IMR-90 (cell line): ENCODE measurements at regions of chr6 and their contacts with region 1.

Region 1: DNA sequence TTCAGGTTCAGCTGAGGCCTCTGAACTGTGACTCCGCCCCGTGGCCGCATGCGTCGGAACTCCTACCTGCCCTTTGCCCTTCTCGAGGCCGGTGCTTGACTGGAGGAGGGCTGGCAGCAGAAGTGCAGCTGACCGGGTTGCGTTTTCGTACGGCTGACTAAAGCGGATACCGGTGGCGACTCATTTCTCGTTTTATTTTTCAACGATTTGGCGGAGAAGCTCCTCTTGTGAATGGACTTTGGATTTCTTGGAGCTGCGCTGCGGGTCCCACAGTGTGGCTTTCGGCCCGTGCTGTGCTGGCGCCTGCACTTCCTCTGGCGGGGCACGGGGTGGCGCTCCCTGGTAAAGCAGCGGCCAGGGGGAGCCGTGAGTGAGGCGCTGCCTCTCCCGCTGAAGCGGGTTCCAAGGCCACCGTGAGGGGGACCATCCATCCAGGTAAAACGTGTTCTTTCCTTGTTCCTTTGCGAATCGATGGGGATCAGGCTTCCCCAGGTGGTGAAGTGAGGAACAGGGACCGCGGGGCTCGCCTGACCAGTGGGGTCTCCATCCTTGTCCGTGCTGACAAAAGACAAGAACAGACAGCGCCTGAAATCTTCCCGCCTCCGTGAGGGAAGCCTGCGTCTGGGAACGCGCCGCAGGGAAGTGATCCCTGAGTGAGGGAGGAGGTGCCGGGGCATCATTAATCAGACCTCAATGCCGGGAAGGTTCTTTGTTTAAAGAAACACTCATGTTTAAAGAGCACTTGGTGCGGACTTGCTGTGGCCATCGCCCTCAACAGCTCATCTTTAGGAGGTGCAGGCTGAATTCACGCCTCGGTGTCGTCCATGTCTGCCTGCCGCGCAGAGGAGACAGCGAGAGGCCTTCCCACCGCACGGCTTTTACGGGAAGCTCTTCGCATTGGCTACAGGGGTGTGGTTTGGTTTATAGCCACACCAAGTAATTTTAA is 38.8 kb downstream of the ERMARD start:
- DNase-seq: peak; percentile 59
- ATAC-seq: peak; percentile 99
- H3K4me3 ChIP-seq: peak overlapping the region; percentile 43
- H3K27ac ChIP-seq: peak overlapping the region; percentile 6
- H3K4me1 ChIP-seq: peaks cover 3% of the 10 kb centered on the region; the same call in 1 of the 2 replicates
- H3K27me3 ChIP-seq: peaks cover 9% of the 10 kb centered on the region; the same call in 1 of the 2 replicates
- CTCF ChIP-seq: peak; percentile 97
- POLR2A ChIP-seq: peak; percentile 44; the same call in 1 of the 2 replicates
- RAD21 ChIP-seq: peak; percentile 93

Region 2: GRCh38 chr6:169800668-169801395 is 10.6 kb after region 1 on chr6:
- CTCF ChIA-PET with region 1: interaction called, 18 read pairs
- POLR2A ChIA-PET with region 1: no interaction called
- dilution Hi-C with region 1: no loop called
- in situ Hi-C with region 1: no loop called
- intact Hi-C with region 1: no loop called
- DNase-seq: peak; percentile 82
- ATAC-seq: peak; percentile 91
- H3K4me3 ChIP-seq: no peak overlapping the region
- H3K27ac ChIP-seq: peak overlapping the region; percentile 4; the same call in 1 of the 2 replicates
- H3K4me1 ChIP-seq: peaks cover 10% of the 10 kb centered on the region; the same call in 1 of the 2 replicates
- H3K27me3 ChIP-seq: peaks cover 18% of the 10 kb centered on the region
- CTCF ChIP-seq: no peak
- POLR2A ChIP-seq: no peak
- RAD21 ChIP-seq: no peak

Region 3: DNA sequence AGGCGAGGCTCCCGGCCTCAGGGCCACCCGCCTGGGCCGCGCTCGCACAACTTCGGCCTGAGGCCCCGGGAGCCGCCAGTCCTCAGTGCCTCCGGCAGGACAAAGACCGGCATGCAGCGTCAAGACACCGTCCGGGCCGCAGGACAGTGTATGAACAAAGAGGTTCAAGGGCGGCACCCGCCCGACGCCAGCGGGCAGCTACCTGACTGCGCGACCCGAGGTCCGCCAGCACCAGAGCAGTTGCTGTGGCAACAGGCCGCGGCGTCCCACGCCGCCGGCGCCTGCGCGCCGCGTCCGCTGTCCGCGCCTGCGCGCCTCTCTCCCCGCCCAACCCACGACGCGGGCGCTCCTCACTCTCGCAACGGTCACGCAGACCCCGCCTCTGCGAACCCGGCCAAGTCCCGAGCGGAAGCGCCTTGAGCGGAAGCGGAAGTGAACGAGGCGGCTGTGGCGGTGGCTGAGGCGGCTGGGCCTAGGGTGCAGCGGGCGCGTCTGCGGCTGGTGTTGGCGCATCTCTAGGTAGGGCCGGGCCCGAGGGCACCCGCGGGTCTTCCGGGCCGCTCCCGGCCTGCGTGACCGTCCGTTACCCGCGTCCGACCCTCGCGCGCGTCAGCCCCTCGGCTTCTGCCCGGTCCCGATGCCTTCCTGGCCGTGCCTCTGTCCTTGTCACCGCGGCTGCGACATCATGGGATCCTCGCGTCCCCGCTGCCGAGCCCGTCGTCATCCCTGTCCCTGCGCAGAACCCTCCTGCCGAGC is 516.2 kb after region 1 on chr6 and contains the start of gene FAM120B:
- CTCF ChIA-PET with region 1: no interaction called
- POLR2A ChIA-PET with region 1: no interaction called
- dilution Hi-C with region 1: no loop called
- in situ Hi-C with region 1: loop called (anchors 10 kb)
- intact Hi-C with region 1: loop called (anchors 5 kb)
- DNase-seq: peak; percentile 93
- ATAC-seq: peak; percentile 98
- H3K4me3 ChIP-seq: peak within 1 kb of the TSS; percentile 75
- H3K27ac ChIP-seq: peak within 1 kb of the TSS; percentile 67
- H3K4me1 ChIP-seq: peaks cover 10% of the 10 kb centered on the region
- H3K27me3 ChIP-seq: no peaks in the 10 kb centered on the region
- CTCF ChIP-seq: no peak
- POLR2A ChIP-seq: peak; percentile 91
- RAD21 ChIP-seq: no peak
- total RNA-seq, gene FAM120B: 20.8 and 28.0 TPM in 2 replicates

Region 4: DNA sequence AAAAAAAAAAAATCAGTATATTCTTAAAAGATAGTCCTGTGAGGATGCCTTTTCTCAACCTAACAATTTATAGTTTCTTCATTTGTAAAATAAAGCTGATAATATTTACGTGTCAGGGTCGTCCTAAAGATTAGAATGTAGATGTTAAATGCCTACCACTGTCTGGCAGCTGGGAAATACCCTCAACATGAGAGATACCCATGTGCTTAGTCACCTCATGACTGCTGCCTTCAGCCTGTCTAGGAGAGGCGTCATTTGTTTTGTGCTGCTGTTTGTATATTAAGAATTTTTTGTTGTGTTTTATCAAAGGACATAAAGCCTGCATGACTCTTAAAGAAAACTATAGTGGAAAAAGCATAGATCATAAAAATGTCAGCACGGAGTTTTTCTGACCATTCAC is 525.8 kb after region 1 on chr6:
- CTCF ChIA-PET with region 1: interaction called, 3 read pairs
- POLR2A ChIA-PET with region 1: no interaction called
- dilution Hi-C with region 1: no loop called
- in situ Hi-C with region 1: no loop called
- intact Hi-C with region 1: loop called (anchors 5 kb)
- DNase-seq: peak; percentile 38
- ATAC-seq: no peak
- H3K4me3 ChIP-seq: no peak overlapping the region
- H3K27ac ChIP-seq: no peak overlapping the region
- H3K4me1 ChIP-seq: peaks cover 7% of the 10 kb centered on the region
- H3K27me3 ChIP-seq: no peaks in the 10 kb centered on the region
- CTCF ChIP-seq: no peak
- POLR2A ChIP-seq: no peak
- RAD21 ChIP-seq: no peak

Region 5: DNA sequence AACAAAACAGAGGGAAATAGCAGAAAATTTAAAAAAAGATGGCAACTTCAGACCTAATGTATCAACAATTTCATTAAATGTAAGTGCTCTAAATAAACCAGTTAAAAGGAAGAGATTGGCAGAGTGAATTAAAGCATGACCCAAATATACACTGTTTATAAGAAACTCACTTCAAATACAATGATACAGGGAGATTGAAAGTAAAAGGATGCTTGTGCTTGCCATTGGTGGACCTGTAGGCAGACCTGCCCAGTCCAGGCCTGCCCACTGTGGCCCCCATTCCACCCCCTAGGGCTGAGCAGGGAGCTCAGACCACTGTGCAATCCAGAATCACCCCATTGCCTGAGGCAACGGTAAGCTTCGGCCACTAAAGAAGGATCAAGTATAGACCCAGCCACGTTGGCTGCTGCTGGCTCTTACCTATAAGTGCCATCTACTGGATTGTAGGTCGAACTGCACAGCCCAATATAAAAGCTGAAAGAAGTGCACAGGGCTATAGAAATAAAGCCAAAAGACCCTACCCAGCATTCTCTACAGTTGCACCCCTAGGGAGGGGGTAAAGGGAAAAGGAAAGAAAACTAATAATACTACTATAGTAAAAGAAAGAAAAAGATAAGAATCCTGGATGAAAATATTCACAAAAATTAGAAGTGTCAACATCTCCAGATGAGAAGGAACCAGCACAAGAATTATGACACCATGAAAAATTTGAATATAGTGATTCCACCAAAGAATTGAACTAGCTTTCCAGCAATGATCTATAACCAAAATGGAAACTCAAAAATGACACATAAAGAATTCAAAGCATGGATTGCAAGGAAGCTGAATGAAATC is 726.7 kb after region 1 on chr6:
- CTCF ChIA-PET with region 1: interaction called, 6 read pairs
- POLR2A ChIA-PET with region 1: no interaction called
- dilution Hi-C with region 1: no loop called
- in situ Hi-C with region 1: loop called (anchors 10 kb)
- intact Hi-C with region 1: loop called (anchors 1 kb)
- DNase-seq: peak; percentile 78
- ATAC-seq: peak; percentile 100
- H3K4me3 ChIP-seq: no peak overlapping the region
- H3K27ac ChIP-seq: no peak overlapping the region
- H3K4me1 ChIP-seq: no peaks in the 10 kb centered on the region
- H3K27me3 ChIP-seq: peaks cover 3% of the 10 kb centered on the region
- CTCF ChIP-seq: peak; percentile 79
- POLR2A ChIP-seq: no peak
- RAD21 ChIP-seq: peak; percentile 94

Region 6: DNA sequence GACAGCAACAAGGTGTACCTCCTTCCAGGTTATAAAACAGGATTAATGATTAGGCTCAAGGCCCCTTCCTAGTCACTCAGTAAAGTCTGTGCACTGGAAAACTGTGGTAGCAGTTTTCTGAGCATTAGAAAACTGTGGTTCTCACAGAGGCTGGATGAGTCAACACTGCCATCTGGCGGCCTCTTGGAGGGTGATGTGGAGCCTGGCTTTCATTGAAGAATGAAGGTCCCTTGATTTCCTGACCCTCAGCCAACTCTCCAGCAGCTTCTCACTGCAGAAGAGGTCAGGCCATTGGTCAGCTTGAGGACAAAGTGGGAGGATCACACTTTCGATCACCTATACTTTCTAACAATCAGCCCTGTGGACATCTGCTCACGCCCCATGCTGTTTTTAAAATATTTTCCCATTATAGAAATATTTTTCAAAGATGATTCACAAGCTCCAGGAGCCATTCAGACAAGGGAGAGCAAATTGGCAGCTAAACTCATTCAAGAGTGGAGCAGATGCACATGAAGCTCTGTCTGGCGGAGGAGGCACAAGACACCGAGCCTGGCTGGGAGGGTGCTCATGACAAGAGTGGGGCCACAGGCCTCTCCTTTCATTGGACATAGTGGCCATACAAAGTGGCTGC is 739.7 kb after region 1 on chr6:
- CTCF ChIA-PET with region 1: interaction called, 23 read pairs
- POLR2A ChIA-PET with region 1: interaction called, 4 read pairs
- dilution Hi-C with region 1: no loop called
- in situ Hi-C with region 1: no loop called
- intact Hi-C with region 1: loop called (anchors 1 kb)
- DNase-seq: peak; percentile 69
- ATAC-seq: peak; percentile 88
- H3K4me3 ChIP-seq: no peak overlapping the region
- H3K27ac ChIP-seq: no peak overlapping the region
- H3K4me1 ChIP-seq: peaks cover 6% of the 10 kb centered on the region
- H3K27me3 ChIP-seq: no peaks in the 10 kb centered on the region
- CTCF ChIP-seq: peak; percentile 92
- POLR2A ChIP-seq: no peak
- RAD21 ChIP-seq: peak; percentile 95